GM13977 (cell line): ENCODE measurements at regions of chr6 and their contacts with region 1.

Region 1: GRCh38 chr6:34248727-34249551 is at the start of gene SMIM29:
- DNase-seq: peak; percentile 97
- CTCF ChIP-seq: peak; percentile 90

Region 2: DNA sequence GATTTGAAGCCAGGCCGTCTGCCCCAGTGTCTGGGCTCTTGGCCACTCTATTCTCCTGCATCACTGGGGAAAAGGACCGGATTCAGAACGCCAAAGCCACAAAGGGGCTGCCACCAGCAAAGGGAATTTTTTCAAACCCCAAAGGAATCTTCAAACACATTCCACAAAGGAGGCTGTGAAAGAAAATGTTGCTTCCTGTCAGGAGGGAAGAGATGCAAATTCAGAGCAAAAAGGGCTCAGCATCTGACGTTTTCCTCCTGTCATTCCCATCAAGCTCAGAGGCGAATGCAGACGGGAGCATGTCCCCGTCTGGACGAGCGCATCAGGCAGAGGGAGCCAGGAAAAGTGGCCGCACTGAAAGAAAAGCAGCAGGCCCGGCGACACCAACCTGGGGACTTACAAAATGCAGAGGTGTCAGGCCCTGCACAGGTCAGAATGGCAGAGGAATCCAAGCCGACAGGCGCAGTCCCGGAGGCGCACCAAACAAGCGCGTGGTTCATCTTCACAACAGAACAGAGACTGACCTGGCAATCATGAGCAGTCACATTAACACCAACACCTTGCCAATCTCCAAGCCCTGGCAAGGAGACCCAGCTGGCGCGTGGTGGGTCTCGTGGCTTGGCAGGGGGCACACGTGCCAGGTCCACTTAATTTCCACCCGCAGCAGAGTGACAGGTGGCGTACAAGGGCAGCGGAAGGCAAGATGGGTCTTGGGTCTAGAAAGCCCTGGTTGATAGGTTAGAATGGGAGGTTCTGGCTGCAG is 165.9 kb before region 1 on chr6:
- in situ Hi-C with region 1: no loop called
- DNase-seq: no peak
- CTCF ChIP-seq: no peak

Region 3: DNA sequence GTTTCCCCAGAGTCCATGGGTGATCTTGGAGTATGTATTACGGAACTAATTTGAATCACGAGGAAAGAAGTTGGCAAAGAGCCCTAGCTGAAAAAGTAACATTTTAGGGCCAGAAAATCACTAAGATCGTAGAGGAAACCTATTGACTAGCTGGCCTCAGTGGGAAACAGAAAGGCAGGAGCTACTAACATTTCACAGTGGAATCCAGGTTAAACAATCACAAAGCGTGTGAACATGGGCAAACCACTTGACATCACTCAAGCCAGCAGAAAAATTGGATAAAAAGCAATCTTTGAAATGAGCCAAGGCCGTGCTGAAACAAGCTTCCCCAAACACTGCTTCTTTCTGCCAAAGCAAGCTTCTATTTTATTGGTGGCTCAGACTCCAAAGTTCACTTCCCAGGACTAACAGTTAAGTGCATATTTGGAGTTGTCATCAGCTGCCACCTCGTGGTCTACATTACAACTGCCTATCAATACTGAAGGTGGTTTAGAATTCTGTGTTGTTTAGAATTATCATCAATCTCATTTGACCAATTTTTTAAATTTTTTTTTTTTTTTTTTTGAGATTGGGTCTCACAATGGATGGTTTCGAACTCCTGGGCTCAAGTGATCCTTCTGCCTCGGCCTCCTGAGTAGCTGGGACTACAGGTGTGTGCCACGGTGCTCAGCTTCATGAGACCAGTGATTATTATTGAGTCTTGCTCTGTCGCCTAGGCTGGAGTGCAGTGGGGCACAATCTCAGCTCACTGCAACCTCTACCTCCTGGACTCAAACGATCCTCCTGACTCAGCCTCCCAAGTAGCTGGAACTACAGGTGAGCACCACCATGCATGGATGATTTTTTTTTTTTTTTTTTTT is 166.3 kb after region 1 on chr6:
- in situ Hi-C with region 1: loop called (anchors 10 kb)
- DNase-seq: peak; percentile 40
- CTCF ChIP-seq: peak; percentile 33

Region 4: GRCh38 chr6:34514593-34515472 is 265.9 kb after region 1 on chr6:
- in situ Hi-C with region 1: no loop called
- DNase-seq: no peak
- CTCF ChIP-seq: no peak

Region 5: GRCh38 chr6:34610819-34611477 is 362.0 kb after region 1 on chr6:
- in situ Hi-C with region 1: loop called (anchors 25 kb)
- DNase-seq: no peak
- CTCF ChIP-seq: no peak